ENCODE measurements at regions of chr10 and their contacts with region 1.

Region 1: GRCh38 chr10:31031558-31032257 is at the start of gene ZNF438:
- DNase-seq: peak; percentile 97
- ATAC-seq: peak; percentile 86 to 96 (median 88)
- H3K4me3 ChIP-seq: peak within 1 kb of the TSS; percentile 66
- H3K4me3 Mint-ChIP-seq: peak within 1 kb of the TSS; percentile 94
- H3K27ac ChIP-seq: peak within 1 kb of the TSS; percentile 90
- H3K27ac Mint-ChIP-seq: peak within 1 kb of the TSS; percentile 90 to 97
- H3K4me1 ChIP-seq: peaks cover 15% of the 10 kb centered on the region
- H3K4me1 Mint-ChIP-seq: peaks cover 10 to 11% of the 10 kb centered on the region in 2 donors
- H3K27me3 ChIP-seq: no peaks in the 10 kb centered on the region
- H3K27me3 Mint-ChIP-seq: no peaks in the 10 kb centered on the region
- CTCF ChIP-seq: peak; percentile 73
- total RNA-seq, gene ZNF438: 2.2 to 3.7 (median 3.7) TPM

Region 2: DNA sequence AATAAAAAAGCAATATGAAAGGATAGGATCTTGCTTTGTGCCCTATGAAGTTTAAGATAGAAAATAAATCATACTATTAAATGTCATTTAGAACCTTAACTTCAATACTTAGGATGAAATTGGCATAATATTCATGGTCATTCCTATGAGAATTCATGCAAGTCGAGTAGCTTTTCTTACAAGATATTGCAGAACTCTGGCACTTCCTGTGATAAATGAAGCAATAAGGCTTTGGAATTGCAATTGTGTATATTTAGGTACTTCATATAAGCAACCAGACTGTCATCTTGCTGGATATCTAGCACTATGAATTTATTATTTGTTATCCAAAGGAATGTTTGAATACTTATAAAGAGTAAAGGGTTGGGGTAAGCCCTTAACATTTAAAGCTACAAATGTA is 116.6 kb before region 1 on chr10:
- intact Hi-C with region 1: no loop called
- DNase-seq: no peak
- ATAC-seq: no peak
- H3K4me3 ChIP-seq: no peak overlapping the region
- H3K4me3 Mint-ChIP-seq: no peak overlapping the region
- H3K27ac ChIP-seq: no peak overlapping the region
- H3K27ac Mint-ChIP-seq: no peak overlapping the region
- H3K4me1 ChIP-seq: no peaks in the 10 kb centered on the region
- H3K4me1 Mint-ChIP-seq: no peaks in the 10 kb centered on the region
- H3K27me3 ChIP-seq: no peaks in the 10 kb centered on the region
- H3K27me3 Mint-ChIP-seq: peaks cover 0 to 2% of the 10 kb centered on the region in 2 donors
- CTCF ChIP-seq: no peak

Region 3: GRCh38 chr10:30999070-30999712 is 32.5 kb before region 1 on chr10:
- intact Hi-C with region 1: loop called (anchors 5 kb)
- DNase-seq: peak in 1 of 2 donors; percentile 36
- ATAC-seq: peak; percentile 46 to 64 (median 55)
- H3K4me3 ChIP-seq: peak overlapping the region; percentile 38
- H3K4me3 Mint-ChIP-seq: peak overlapping the region; percentile 81
- H3K27ac ChIP-seq: peak overlapping the region; percentile 66
- H3K27ac Mint-ChIP-seq: peak overlapping the region; percentile 84 to 90
- H3K4me1 ChIP-seq: peaks cover 5% of the 10 kb centered on the region
- H3K4me1 Mint-ChIP-seq: peaks cover 9 to 21% of the 10 kb centered on the region in 2 donors
- H3K27me3 ChIP-seq: no peaks in the 10 kb centered on the region
- H3K27me3 Mint-ChIP-seq: no peaks in the 10 kb centered on the region
- CTCF ChIP-seq: no peak

Region 4: DNA sequence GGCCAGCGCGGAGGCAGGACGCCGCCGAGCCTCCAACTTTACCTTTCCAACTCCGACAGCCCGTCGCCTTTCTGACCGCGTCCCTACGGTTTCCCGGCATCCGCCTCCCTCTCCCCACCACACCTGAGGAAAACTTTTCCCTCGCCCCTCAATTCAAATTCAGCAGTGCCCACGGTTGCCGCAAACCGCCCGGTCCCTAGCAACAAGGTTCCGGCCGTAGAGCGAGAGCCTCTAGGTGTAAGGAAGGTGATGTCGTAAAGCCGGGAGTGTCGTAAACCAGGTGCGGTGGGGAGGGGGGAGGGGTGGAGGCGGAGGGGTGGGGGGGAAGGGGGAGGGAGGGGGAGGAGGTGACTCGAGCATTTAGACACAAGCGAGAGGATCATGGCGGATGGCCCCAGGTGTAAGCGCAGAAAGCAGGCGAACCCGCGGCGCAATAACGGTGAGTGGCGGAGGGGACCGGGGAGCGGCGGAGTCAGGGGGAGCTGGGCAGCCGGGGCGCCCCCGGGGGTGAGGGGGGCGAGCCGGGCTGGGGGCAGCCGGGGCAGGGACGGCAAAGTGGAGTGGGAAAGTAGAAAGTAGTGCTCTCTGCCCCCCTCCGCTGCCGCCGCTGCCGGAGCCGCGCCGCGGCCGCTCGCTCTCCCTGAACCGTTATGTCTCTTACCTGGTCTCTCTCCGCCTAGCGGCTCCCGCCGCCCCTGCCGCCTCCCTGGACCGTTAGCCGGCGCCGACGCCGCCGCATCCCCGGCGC is 287.3 kb after region 1 on chr10 and contains the start of gene ZEB1:
- intact Hi-C with region 1: loop called (anchors 5 kb)
- DNase-seq: peak; percentile 77 to 97
- ATAC-seq: peak; percentile 62 to 86 (median 74)
- H3K4me3 ChIP-seq: peak within 1 kb of the TSS; percentile 93
- H3K4me3 Mint-ChIP-seq: peak within 1 kb of the TSS; percentile 95
- H3K27ac ChIP-seq: peak within 1 kb of the TSS; percentile 96
- H3K27ac Mint-ChIP-seq: peak within 1 kb of the TSS; percentile 64 to 94
- H3K4me1 ChIP-seq: peaks cover 17% of the 10 kb centered on the region
- H3K4me1 Mint-ChIP-seq: peaks cover 27 to 44% of the 10 kb centered on the region in 2 donors
- H3K27me3 ChIP-seq: no peaks in the 10 kb centered on the region
- H3K27me3 Mint-ChIP-seq: peaks cover 0 to 8% of the 10 kb centered on the region in 2 donors
- CTCF ChIP-seq: peak; percentile 14
- total RNA-seq, gene ZEB1: 29.3 to 30.6 (median 29.7) TPM

Region 5: GRCh38 chr10:31759799-31760626 is 728.3 kb after region 1 on chr10:
- intact Hi-C with region 1: loop called (anchors 1 kb)
- DNase-seq: peak; percentile 91 to 97
- ATAC-seq: peak; percentile 94 to 98 (median 95)
- H3K4me3 ChIP-seq: peak overlapping the region; percentile 95
- H3K4me3 Mint-ChIP-seq: peak overlapping the region; percentile 86
- H3K27ac ChIP-seq: peak overlapping the region; percentile 95
- H3K27ac Mint-ChIP-seq: peak overlapping the region; percentile 93 to 94
- H3K4me1 ChIP-seq: peaks cover 14% of the 10 kb centered on the region
- H3K4me1 Mint-ChIP-seq: peaks cover 13 to 14% of the 10 kb centered on the region in 2 donors
- H3K27me3 ChIP-seq: no peaks in the 10 kb centered on the region
- H3K27me3 Mint-ChIP-seq: no peaks in the 10 kb centered on the region
- CTCF ChIP-seq: no peak

Region 6: DNA sequence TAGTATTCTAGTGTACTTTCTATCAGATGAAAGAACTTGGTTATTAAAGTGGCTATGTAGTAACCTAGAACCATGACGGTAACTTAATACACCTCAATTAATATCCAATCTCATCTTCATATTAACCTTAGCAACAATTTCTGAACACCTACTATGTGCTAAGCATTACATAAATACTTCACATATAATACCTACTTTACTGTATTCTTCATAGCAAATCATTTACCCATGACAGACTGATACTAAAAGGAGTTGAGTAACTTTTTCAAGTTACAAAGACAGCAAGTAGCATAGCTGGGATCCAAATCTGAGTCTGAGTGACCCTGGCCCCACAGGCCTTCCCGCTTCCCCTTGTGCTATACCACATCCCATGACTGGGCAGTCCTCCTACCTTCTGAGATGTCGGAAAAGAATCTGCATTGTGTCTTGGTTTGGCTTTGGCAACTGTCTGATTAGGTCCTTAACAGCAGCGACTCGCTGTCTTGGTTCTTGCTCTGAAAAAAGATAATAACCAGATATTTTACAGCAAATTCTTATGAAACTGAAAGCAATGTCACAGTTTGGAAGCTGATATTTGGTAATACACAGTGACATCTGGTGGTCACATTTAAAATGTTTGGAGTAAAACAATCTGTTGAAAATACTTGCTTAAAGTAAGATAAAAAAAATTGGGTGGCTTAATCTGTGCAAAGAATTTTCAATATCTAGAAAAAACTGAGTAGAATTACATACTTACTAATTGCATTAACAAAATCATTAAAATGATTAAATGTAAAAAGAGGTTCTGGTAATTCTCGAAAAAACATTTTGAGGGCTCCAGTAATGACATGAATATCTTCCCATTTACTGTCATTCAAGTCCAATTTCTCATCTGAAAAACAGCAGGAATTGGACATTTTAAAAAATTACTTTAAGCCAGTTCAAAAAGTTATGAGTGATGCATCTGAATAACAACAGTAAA is 776.8 kb after region 1 on chr10:
- intact Hi-C with region 1: loop called (anchors 5 kb)
- DNase-seq: peak in 1 of 2 donors; percentile 77
- ATAC-seq: peak; percentile 68 to 86 (median 70)
- H3K4me3 ChIP-seq: no peak overlapping the region
- H3K4me3 Mint-ChIP-seq: peak overlapping the region; percentile 62
- H3K27ac ChIP-seq: peak overlapping the region; percentile 12
- H3K27ac Mint-ChIP-seq: peak overlapping the region; percentile 72 to 86
- H3K4me1 ChIP-seq: peaks cover 4% of the 10 kb centered on the region
- H3K4me1 Mint-ChIP-seq: peaks cover 7 to 10% of the 10 kb centered on the region in 2 donors
- H3K27me3 ChIP-seq: no peaks in the 10 kb centered on the region
- H3K27me3 Mint-ChIP-seq: no peaks in the 10 kb centered on the region
- CTCF ChIP-seq: peak; percentile 73

Region 7: DNA sequence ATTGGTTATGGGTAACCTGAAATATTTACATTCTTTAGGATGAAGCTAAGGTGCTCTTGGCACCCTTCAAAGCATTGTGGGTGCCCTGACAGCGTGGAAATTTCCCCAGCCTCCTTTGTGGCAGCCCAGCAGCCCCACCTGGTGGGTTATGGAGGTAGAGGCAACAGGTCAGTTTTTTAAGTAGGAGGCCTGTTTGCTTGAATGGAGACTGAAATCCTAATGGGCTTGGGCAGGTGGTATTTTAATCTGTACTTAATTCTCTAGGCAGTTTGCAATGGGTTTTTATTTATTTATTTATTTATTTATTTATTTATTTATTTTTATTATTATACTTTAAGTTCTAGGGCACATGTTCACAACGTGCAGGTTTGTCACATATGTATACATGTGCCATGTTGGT is 1175.8 kb after region 1 on chr10:
- intact Hi-C with region 1: no loop called
- DNase-seq: peak; percentile 24 to 72
- ATAC-seq: peak; percentile 74 to 83 (median 80)
- H3K4me3 ChIP-seq: no peak overlapping the region
- H3K4me3 Mint-ChIP-seq: no peak overlapping the region
- H3K27ac ChIP-seq: no peak overlapping the region
- H3K27ac Mint-ChIP-seq: no peak overlapping the region
- H3K4me1 ChIP-seq: no peaks in the 10 kb centered on the region
- H3K4me1 Mint-ChIP-seq: no peaks in the 10 kb centered on the region
- H3K27me3 ChIP-seq: no peaks in the 10 kb centered on the region
- H3K27me3 Mint-ChIP-seq: peaks cover 0 to 7% of the 10 kb centered on the region in 2 donors
- CTCF ChIP-seq: peak; percentile 55